CD4-positive, alpha-beta memory T cell (primary cell): ENCODE measurements at regions of chr11 and their contacts with region 1.

Region 1: GRCh38 chr11:6377902-6378639 is 12.2 kb upstream of the SMPD1 start:
- DNase-seq: no peak
- H3K4me3 ChIP-seq: no peak overlapping the region
- H3K4me3 Mint-ChIP-seq: peak overlapping the region in 5 of 8 donors; percentile 22 to 68 (median 60)
- H3K27ac ChIP-seq: no peak overlapping the region
- H3K27ac Mint-ChIP-seq: peak overlapping the region; percentile 28 to 90 (median 79)
- H3K4me1 ChIP-seq: peaks cover 17% of the 10 kb centered on the region
- H3K4me1 Mint-ChIP-seq: peaks cover 14 to 29% (median 23%) of the 10 kb centered on the region in 4 donors
- H3K27me3 ChIP-seq: no peaks in the 10 kb centered on the region
- H3K27me3 Mint-ChIP-seq: no peaks in the 10 kb centered on the region

Region 2: GRCh38 chr11:6362873-6363678 is 15.0 kb before region 1 on chr11:
- CTCF ChIA-PET with region 1: interaction called, 50 read pairs
- POLR2A ChIA-PET with region 1: no interaction called
- intact Hi-C with region 1: no loop called
- DNase-seq: peak; percentile 42 to 59 (median 52)
- H3K4me3 ChIP-seq: no peak overlapping the region
- H3K4me3 Mint-ChIP-seq: no peak overlapping the region
- H3K27ac ChIP-seq: no peak overlapping the region
- H3K27ac Mint-ChIP-seq: no peak overlapping the region
- H3K4me1 ChIP-seq: no peaks in the 10 kb centered on the region
- H3K4me1 Mint-ChIP-seq: no peaks in the 10 kb centered on the region
- H3K27me3 ChIP-seq: no peaks in the 10 kb centered on the region
- H3K27me3 Mint-ChIP-seq: no peaks in the 10 kb centered on the region

Region 3: DNA sequence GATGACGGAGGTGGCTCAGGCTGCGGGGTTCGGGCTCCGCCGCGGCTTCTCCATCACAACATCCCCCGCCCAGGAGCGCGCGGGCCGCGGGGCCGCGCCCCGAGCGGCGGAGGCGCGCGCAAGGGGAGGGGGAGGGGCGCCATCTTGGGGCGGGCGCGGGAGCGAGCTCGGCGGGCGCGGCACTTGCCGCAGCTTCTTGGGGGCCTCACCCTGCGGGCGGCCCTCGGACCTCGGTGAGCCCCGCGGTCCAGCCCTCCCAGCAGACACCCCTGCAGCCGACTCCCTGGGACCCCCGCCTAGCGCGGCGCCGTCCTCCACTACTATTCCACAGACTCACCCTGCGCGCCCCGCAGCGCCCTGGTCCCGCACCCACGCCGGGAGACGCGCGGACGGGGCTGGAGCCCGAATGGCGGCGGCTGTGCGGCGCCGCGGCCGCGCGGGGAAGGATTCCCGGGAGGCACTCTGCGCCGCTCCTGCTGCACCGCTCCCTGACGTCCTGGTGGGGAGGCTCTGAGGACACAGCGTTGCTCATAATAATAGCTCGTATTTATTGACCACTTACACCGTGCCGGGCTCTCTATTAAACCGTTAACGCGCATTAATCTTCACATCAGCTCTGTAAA is 41.0 kb after region 1 on chr11 and contains the start of gene APBB1:
- CTCF ChIA-PET with region 1: interaction called, 30 read pairs
- POLR2A ChIA-PET with region 1: interaction called, 34 read pairs
- intact Hi-C with region 1: loop called (anchors 1 kb)
- DNase-seq: peak; percentile 67 to 81 (median 79)
- H3K4me3 ChIP-seq: peak within 1 kb of the TSS; percentile 43 to 74
- H3K4me3 Mint-ChIP-seq: peak within 1 kb of the TSS in 6 of 8 donors; percentile 81 to 89 (median 86)
- H3K27ac ChIP-seq: peak within 1 kb of the TSS; percentile 73
- H3K27ac Mint-ChIP-seq: peak within 1 kb of the TSS; percentile 74 to 90 (median 84)
- H3K4me1 ChIP-seq: peaks cover 50% of the 10 kb centered on the region
- H3K4me1 Mint-ChIP-seq: peaks cover 5 to 12% (median 8%) of the 10 kb centered on the region in 4 donors
- H3K27me3 ChIP-seq: no peaks in the 10 kb centered on the region
- H3K27me3 Mint-ChIP-seq: peaks cover 6 to 15% of the 10 kb centered on the region in 2 donors
- total RNA-seq, gene APBB1: 93.2 to 93.5 TPM

Region 4: DNA sequence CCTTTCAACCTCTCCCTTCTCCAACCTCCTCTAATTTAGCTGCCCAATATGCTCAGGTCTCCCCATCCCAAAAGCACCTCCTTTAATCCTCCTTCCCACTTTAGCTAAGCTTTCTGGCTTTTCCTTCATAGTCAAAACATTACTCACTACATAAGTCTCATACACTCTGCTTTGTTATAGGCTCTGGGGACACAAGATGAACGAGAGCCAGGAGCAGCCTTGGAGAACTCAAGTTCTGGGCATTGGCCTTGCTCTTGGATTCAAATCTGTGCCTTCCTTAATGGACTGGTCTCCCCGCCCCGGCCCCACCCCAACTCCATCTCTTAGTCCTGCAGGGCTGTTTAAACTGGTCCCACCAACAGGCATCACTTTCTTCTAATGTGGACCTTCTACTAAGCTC is 74.1 kb after region 1 on chr11:
- CTCF ChIA-PET with region 1: interaction called, 1,014 read pairs
- POLR2A ChIA-PET with region 1: interaction called, 3 read pairs
- intact Hi-C with region 1: no loop called
- DNase-seq: no peak
- H3K4me3 ChIP-seq: no peak overlapping the region
- H3K4me3 Mint-ChIP-seq: no peak overlapping the region
- H3K27ac ChIP-seq: no peak overlapping the region
- H3K27ac Mint-ChIP-seq: no peak overlapping the region
- H3K4me1 ChIP-seq: no peaks in the 10 kb centered on the region
- H3K4me1 Mint-ChIP-seq: no peaks in the 10 kb centered on the region
- H3K27me3 ChIP-seq: no peaks in the 10 kb centered on the region
- H3K27me3 Mint-ChIP-seq: no peaks in the 10 kb centered on the region

Region 5: DNA sequence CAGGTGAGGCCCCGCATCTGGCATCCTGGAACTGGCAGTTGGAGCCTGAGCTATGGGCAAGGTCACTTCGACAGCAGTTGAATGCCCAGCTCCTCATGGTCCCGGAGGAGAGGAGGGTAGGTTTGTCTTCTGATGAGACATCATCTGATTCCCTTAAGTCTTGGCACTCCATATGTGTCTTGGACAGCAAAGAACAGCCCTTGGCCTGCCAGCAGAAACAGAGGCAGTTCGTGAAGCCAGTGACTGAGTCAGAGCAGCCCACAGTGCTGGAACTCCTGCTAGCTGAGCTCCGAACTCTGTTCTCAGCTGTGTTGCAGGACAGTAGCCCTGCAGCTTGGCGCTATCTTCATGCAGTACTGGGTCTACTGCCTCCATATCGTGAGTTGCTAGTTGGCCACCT is 120.0 kb after region 1 on chr11:
- CTCF ChIA-PET with region 1: interaction called, 26 read pairs
- POLR2A ChIA-PET with region 1: no interaction called
- intact Hi-C with region 1: no loop called
- DNase-seq: no peak
- H3K4me3 ChIP-seq: no peak overlapping the region
- H3K4me3 Mint-ChIP-seq: no peak overlapping the region
- H3K27ac ChIP-seq: no peak overlapping the region
- H3K27ac Mint-ChIP-seq: no peak overlapping the region
- H3K4me1 ChIP-seq: no peaks in the 10 kb centered on the region
- H3K4me1 Mint-ChIP-seq: peaks cover 0 to 3% (median under 1%) of the 10 kb centered on the region in 4 donors
- H3K27me3 ChIP-seq: no peaks in the 10 kb centered on the region
- H3K27me3 Mint-ChIP-seq: no peaks in the 10 kb centered on the region

Region 6: GRCh38 chr11:6603287-6604080 is 225.4 kb after region 1 on chr11 and contains the starts of genes ILK and RRP8:
- CTCF ChIA-PET with region 1: interaction called, 5 read pairs
- POLR2A ChIA-PET with region 1: interaction called, 3 read pairs
- intact Hi-C with region 1: loop called (anchors 5 kb)
- DNase-seq: peak; percentile 82 to 86 (median 85)
- H3K4me3 ChIP-seq: peak within 1 kb of the TSS; percentile 94 to 96
- H3K4me3 Mint-ChIP-seq: no peak within 1 kb of the TSS
- H3K27ac ChIP-seq: peak within 1 kb of the TSS; percentile 85
- H3K27ac Mint-ChIP-seq: no peak within 1 kb of the TSS
- H3K4me1 ChIP-seq: peaks cover 62% of the 10 kb centered on the region
- H3K4me1 Mint-ChIP-seq: peaks cover 10 to 34% (median 20%) of the 10 kb centered on the region in 4 donors
- H3K27me3 ChIP-seq: no peaks in the 10 kb centered on the region
- H3K27me3 Mint-ChIP-seq: no peaks in the 10 kb centered on the region
- total RNA-seq, gene ILK: 131 to 132 TPM
- total RNA-seq, gene RRP8: 29.9 to 36.0 TPM

Region 7: DNA sequence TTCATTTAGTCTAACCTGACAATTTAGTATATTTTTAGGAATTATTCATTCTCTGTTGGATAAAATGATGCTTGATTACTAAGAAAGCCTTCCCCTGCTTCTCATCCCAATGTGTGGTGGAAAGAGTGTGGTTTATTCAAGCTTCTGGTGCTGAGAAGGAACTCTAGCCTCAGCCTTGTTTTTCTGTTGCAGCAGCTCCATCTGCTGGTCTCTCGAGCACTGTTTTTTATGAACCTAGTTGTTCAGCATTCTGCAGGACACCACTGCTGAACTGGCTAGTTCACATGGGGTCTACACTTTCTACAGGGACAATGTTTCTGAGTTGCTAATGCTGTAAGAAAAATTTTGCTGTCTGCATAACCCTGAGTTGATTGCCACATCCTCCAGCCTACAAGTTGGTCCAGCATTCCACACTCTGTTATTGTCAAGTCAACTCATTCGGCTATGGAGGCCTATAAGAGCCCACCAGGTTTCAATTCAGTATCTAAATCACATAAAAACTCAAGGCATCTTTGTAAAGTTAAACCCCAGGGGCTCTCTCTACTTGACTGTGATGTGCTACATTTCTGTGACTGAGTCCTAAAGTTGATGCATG is 379.4 kb after region 1 on chr11:
- CTCF ChIA-PET with region 1: interaction called, 23 read pairs
- POLR2A ChIA-PET with region 1: no interaction called
- intact Hi-C with region 1: loop called (anchors 5 kb)
- DNase-seq: peak; percentile 55 to 62 (median 60)
- H3K4me3 ChIP-seq: no peak overlapping the region
- H3K4me3 Mint-ChIP-seq: no peak overlapping the region
- H3K27ac ChIP-seq: no peak overlapping the region
- H3K27ac Mint-ChIP-seq: no peak overlapping the region
- H3K4me1 ChIP-seq: peaks cover 6% of the 10 kb centered on the region
- H3K4me1 Mint-ChIP-seq: peaks cover 0 to 11% (median 8%) of the 10 kb centered on the region in 4 donors
- H3K27me3 ChIP-seq: no peaks in the 10 kb centered on the region
- H3K27me3 Mint-ChIP-seq: peaks cover 2 to 4% of the 10 kb centered on the region in 2 donors

Region 8: GRCh38 chr11:6825231-6825744 is 447.2 kb after region 1 on chr11:
- CTCF ChIA-PET with region 1: no interaction called
- POLR2A ChIA-PET with region 1: no interaction called
- intact Hi-C with region 1: no loop called
- DNase-seq: no peak
- H3K4me3 ChIP-seq: no peak overlapping the region
- H3K4me3 Mint-ChIP-seq: no peak overlapping the region
- H3K27ac ChIP-seq: no peak overlapping the region
- H3K27ac Mint-ChIP-seq: no peak overlapping the region
- H3K4me1 ChIP-seq: no peaks in the 10 kb centered on the region
- H3K4me1 Mint-ChIP-seq: no peaks in the 10 kb centered on the region
- H3K27me3 ChIP-seq: no peaks in the 10 kb centered on the region
- H3K27me3 Mint-ChIP-seq: peaks cover 5 to 13% of the 10 kb centered on the region in 2 donors